ENCODE measurements at regions of chr18 and their contacts with region 1.

Region 1: GRCh38 chr18:12694032-12694431 is 8.5 kb downstream of the CEP76 start:
- DNase-seq: no peak
- H3K4me3 ChIP-seq: no peak overlapping the region
- H3K27ac ChIP-seq: no peak overlapping the region
- H3K4me1 ChIP-seq: peaks cover 5% of the 10 kb centered on the region
- CTCF ChIP-seq: no peak

Region 2: GRCh38 chr18:12552884-12553242 is 141.2 kb before region 1 on chr18:
- CTCF ChIA-PET with region 1: no interaction called
- POLR2A ChIA-PET with region 1: no interaction called
- intact Hi-C with region 1: no loop called
- DNase-seq: no peak
- H3K4me3 ChIP-seq: no peak overlapping the region
- H3K27ac ChIP-seq: no peak overlapping the region
- H3K4me1 ChIP-seq: no peaks in the 10 kb centered on the region
- CTCF ChIP-seq: no peak

Region 3: DNA sequence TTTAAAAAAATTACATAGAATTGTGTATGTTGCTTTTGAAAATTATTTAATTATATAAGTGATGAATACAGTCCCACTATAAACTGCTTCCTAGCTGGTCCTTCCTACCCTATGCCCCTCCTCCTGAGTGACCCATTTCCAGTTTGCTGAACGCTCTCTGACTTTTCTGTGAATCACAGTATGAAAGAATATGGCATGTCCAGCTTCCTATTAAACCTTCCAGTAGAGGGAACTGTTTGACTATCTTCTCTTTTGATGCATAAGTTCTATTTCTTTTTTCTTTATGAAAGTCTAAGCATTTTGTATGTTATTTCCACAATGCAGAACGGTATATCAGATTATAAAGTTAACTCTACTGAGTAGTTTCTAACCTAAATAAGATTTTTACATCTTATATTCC is 50.1 kb after region 1 on chr18:
- CTCF ChIA-PET with region 1: no interaction called
- POLR2A ChIA-PET with region 1: no interaction called
- intact Hi-C with region 1: loop called (anchors 5 kb)
- DNase-seq: peak; percentile 74
- H3K4me3 ChIP-seq: no peak overlapping the region
- H3K27ac ChIP-seq: no peak overlapping the region
- H3K4me1 ChIP-seq: peaks cover 18% of the 10 kb centered on the region
- CTCF ChIP-seq: peak; percentile 94